ENCODE measurements at regions of chr5 and their contacts with region 1.

Region 1: GRCh38 chr5:134101686-134102439 is 12.6 kb upstream of the TCF7 start:
- DNase-seq: peak; percentile 77
- H3K4me3 ChIP-seq: no peak overlapping the region
- H3K27ac ChIP-seq: no peak overlapping the region
- H3K4me1 ChIP-seq: peaks cover 0 to 18% (median 9%) of the 10 kb centered on the region in 4 donors
- H3K27me3 ChIP-seq: no peaks in the 10 kb centered on the region
- CTCF ChIP-seq: peak; percentile 33 to 89 (median 52)
- EP300 ChIP-seq: no peak
- POLR2A ChIP-seq: no peak

Region 2: GRCh38 chr5:133868946-133869518 is 232.8 kb before region 1 on chr5:
- intact Hi-C with region 1: no loop called
- DNase-seq: peak; percentile 79
- H3K4me3 ChIP-seq: no peak overlapping the region
- H3K27ac ChIP-seq: no peak overlapping the region
- H3K4me1 ChIP-seq: peaks cover 0 to 14% (median 0%) of the 10 kb centered on the region in 4 donors
- H3K27me3 ChIP-seq: no peaks in the 10 kb centered on the region
- CTCF ChIP-seq: peak; percentile 29 to 74 (median 60)
- EP300 ChIP-seq: no peak
- POLR2A ChIP-seq: no peak

Region 3: DNA sequence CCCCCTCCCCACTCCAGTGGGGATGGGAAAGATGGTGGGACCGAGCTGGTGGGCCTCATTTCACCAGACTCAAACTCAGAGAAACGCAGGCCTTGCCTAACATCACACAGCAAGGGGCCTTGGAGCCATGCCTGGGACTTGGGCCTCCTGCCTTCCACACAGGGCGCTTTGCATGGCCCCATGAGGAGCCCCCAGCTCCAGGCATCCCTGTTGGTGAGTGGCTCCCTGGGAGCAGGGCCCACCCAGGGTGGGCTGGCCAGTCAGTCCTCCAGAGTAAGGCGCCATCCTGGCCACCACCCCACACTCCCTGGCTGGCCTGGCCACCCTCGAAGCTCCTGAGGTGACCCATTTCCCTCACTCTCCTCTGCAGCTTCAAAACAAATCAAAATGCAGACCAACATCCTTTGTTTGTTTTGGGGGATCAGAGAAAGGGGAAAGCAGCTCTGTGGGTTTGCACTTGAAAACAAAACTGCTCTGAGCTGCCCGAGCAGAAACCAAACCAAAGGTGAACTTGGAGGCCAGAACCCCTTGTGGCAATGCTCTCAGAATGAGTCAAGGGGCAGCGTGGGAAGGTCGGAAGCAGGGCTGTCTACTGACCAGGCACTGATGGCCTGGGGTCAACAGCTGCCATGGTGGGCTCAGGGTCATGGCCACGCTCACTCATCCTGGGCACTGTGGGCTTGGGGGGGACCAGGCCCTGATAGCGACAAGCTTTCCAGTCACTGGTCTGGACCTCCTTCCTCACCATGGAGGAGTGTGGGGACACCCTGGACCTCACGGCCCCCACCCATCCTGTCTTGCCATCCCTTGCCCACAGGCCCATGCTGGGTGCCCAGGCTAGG is 60.1 kb before region 1 on chr5:
- intact Hi-C with region 1: loop called (anchors 5 kb)
- DNase-seq: no peak
- H3K4me3 ChIP-seq: no peak overlapping the region
- H3K27ac ChIP-seq: no peak overlapping the region
- H3K4me1 ChIP-seq: no peaks in the 10 kb centered on the region
- H3K27me3 ChIP-seq: no peaks in the 10 kb centered on the region
- CTCF ChIP-seq: no peak
- EP300 ChIP-seq: no peak
- POLR2A ChIP-seq: no peak

Region 4: DNA sequence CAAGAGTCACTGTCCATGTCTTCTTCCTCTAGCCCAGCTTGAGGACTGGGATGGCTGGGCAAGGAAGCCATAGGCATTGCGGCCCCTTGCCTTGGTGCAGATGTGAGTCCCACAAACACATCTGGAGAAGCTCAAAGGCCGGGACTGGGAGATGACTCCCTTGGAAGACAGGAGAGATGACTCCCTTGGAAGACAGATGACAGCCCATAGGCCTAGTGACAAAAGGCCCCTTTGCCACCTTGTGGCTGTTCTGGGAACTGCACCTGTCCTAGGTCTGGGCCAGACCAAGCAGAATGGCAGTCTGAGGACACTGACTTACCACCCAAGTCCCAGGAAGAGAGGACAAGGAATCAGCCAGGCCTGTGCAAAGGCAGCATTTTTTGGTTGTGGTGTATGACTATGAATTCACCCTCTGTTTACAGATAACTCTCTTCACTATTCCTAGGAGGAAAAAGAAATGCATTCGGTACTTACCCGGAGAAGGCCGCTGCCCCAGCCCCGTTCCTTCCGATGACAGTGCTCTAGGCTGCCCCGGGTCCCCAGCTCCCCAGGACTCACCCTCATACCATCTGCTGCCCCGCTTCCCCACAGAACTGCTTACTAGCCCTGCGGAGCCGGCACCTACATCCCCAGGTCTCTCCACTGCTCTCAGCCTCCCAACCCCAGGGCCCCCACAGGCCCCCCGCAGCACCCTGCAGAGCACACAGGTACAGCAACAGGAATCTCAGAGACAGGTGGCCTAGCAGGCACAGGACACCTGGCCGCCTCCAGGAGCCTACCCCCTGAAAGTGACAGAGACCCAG is 44.1 kb after region 1 on chr5:
- intact Hi-C with region 1: loop called (anchors 5 kb)
- DNase-seq: peak; percentile 84
- H3K4me3 ChIP-seq: no peak overlapping the region
- H3K27ac ChIP-seq: no peak overlapping the region
- H3K4me1 ChIP-seq: peaks cover 0 to 20% (median 16%) of the 10 kb centered on the region in 4 donors
- H3K27me3 ChIP-seq: no peaks in the 10 kb centered on the region
- CTCF ChIP-seq: peak; percentile 69 to 96 (median 80)
- EP300 ChIP-seq: no peak
- POLR2A ChIP-seq: no peak

Region 5: GRCh38 chr5:134289509-134290113 is 187.7 kb after region 1 on chr5:
- intact Hi-C with region 1: loop called (anchors 5 kb)
- DNase-seq: peak; percentile 66
- H3K4me3 ChIP-seq: no peak overlapping the region
- H3K27ac ChIP-seq: no peak overlapping the region
- H3K4me1 ChIP-seq: no peaks in the 10 kb centered on the region
- H3K27me3 ChIP-seq: no peaks in the 10 kb centered on the region
- CTCF ChIP-seq: peak; percentile 47 to 81 (median 70)
- EP300 ChIP-seq: no peak
- POLR2A ChIP-seq: no peak

Region 6: GRCh38 chr5:134345996-134346395 is 244.1 kb after region 1 on chr5:
- intact Hi-C with region 1: no loop called
- DNase-seq: no peak
- H3K4me3 ChIP-seq: no peak overlapping the region
- H3K27ac ChIP-seq: no peak overlapping the region
- H3K4me1 ChIP-seq: no peaks in the 10 kb centered on the region
- H3K27me3 ChIP-seq: no peaks in the 10 kb centered on the region
- CTCF ChIP-seq: no peak
- EP300 ChIP-seq: no peak
- POLR2A ChIP-seq: no peak

Measured in sigmoid colon (tissue), 7 donors.